ENCODE measurements at regions of chr18 and their contacts with region 1.

Region 1: GRCh38 chr18:21704603-21705364 is at the start of gene ABHD3:
- DNase-seq: peak; percentile 87 to 95 (median 90)
- ATAC-seq: peak; percentile 99
- H3K4me3 ChIP-seq: peak within 1 kb of the TSS; percentile 98
- H3K27ac ChIP-seq: peak within 1 kb of the TSS; percentile 89
- H3K4me1 ChIP-seq: peaks cover 6 to 21% of the 10 kb centered on the region in 2 experiments
- H3K27me3 ChIP-seq: no peaks in the 10 kb centered on the region
- CTCF ChIP-seq: peak; percentile 30 to 58 (median 47)
- EP300 ChIP-seq: peak; percentile 34; the same call in 1 of the 2 replicates
- POLR2A ChIP-seq: peak; percentile 83
- RAD21 ChIP-seq: no peak; a peak in 1 of 4 replicates
- polyA plus RNA-seq, gene ABHD3: 6.3 to 8.1 TPM

Region 2: GRCh38 chr18:21656402-21656801 is 48.4 kb before region 1 on chr18:
- CTCF ChIA-PET with region 1: no interaction called
- POLR2A ChIA-PET with region 1: interaction called, 3 read pairs
- in situ Hi-C with region 1: no loop called
- intact Hi-C with region 1: loop called (anchors 10 kb)
- DNase-seq: no peak
- ATAC-seq: no peak
- H3K4me3 ChIP-seq: no peak overlapping the region
- H3K27ac ChIP-seq: no peak overlapping the region
- H3K4me1 ChIP-seq: no peaks in the 10 kb centered on the region
- H3K27me3 ChIP-seq: no peaks in the 10 kb centered on the region
- CTCF ChIP-seq: no peak
- EP300 ChIP-seq: no peak
- POLR2A ChIP-seq: no peak
- RAD21 ChIP-seq: no peak

Region 3: DNA sequence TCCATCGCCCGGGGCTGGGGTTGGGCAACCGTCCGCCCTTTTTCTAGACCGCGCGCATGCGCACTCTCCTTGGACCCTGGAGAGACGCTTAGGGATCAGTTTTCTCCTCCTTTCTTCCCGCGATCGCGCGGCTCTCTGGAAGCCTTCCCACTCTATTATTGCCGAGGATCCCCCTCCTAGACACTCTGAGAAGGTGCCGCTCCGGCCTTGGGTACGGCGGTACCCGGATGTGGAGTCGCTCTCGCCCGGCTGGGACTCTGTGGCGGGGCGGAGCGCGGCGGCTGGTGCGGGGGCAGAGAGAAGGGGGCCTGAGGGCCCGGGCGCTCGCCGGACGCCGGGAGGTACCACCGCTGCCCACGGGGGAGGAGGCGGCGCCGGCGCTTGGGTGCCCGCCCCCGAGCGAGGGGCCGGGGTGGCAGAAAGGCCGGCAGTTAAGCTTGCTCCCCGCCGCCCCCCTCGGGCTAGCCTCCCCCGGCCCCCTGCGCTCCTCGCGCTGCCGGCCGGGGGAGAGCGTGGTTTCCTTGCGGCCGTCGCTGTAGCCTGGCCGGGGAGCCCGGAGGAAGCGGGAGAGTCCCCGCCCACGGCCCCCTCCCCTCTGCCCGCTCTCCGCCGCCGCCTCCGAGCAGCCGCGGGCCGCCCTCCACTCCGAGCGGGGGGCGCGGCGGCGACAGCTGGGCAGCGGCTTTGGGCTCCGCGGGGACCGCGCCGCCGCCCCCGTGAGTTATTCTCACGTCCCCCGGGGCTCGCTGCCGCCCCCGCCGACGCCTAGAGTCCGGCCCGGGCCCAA is 36.1 kb after region 1 on chr18 and contains the start of gene MIB1:
- CTCF ChIA-PET with region 1: no interaction called
- POLR2A ChIA-PET with region 1: interaction called, 8 read pairs
- in situ Hi-C with region 1: no loop called
- intact Hi-C with region 1: loop called (anchors 1 kb)
- DNase-seq: peak; percentile 63 to 74 (median 68)
- ATAC-seq: peak; percentile 72
- H3K4me3 ChIP-seq: peak within 1 kb of the TSS; percentile 90
- H3K27ac ChIP-seq: peak within 1 kb of the TSS; percentile 95
- H3K4me1 ChIP-seq: peaks cover 12 to 17% of the 10 kb centered on the region in 2 experiments; a peak in 4 of 5 replicates
- H3K27me3 ChIP-seq: no peaks in the 10 kb centered on the region
- CTCF ChIP-seq: no peak
- EP300 ChIP-seq: no peak
- POLR2A ChIP-seq: peak; percentile 87
- RAD21 ChIP-seq: no peak
- polyA plus RNA-seq, gene MIB1: 7.2 to 7.6 TPM

Region 4: DNA sequence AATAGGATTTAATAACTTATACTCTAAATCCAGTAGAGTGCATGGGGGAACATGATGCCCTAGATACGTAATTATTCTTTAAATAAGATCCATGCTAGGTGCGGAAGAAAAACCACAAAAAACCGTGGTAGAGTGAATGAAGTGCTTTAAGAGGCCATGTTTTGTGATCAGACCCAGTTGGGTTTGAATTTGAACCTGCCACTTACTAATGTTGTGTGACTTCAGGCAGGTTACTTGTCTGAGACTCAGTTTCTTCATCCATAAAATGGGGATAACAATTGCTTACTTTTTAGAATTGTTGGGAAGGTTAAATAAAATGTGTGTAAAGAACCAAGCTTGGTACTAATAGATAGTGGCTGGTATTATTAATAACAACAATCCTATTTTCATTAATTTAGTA is 53.0 kb after region 1 on chr18:
- CTCF ChIA-PET with region 1: no interaction called
- POLR2A ChIA-PET with region 1: no interaction called
- in situ Hi-C with region 1: no loop called
- intact Hi-C with region 1: no loop called
- DNase-seq: no peak
- ATAC-seq: no peak
- H3K4me3 ChIP-seq: no peak overlapping the region
- H3K27ac ChIP-seq: no peak overlapping the region
- H3K4me1 ChIP-seq: peaks cover 4 to 29% of the 10 kb centered on the region in 2 experiments
- H3K27me3 ChIP-seq: no peaks in the 10 kb centered on the region
- CTCF ChIP-seq: no peak
- EP300 ChIP-seq: no peak
- POLR2A ChIP-seq: no peak
- RAD21 ChIP-seq: no peak

Region 5: GRCh38 chr18:21786526-21786925 is 81.7 kb after region 1 on chr18:
- CTCF ChIA-PET with region 1: no interaction called
- POLR2A ChIA-PET with region 1: no interaction called
- in situ Hi-C with region 1: no loop called
- intact Hi-C with region 1: no loop called
- DNase-seq: no peak
- ATAC-seq: no peak
- H3K4me3 ChIP-seq: no peak overlapping the region
- H3K27ac ChIP-seq: no peak overlapping the region
- H3K4me1 ChIP-seq: no peaks in the 10 kb centered on the region
- H3K27me3 ChIP-seq: no peaks in the 10 kb centered on the region
- CTCF ChIP-seq: no peak
- EP300 ChIP-seq: no peak
- POLR2A ChIP-seq: no peak
- RAD21 ChIP-seq: no peak